ENCODE measurements at regions of chr10 and their contacts with region 1.

Region 1: DNA sequence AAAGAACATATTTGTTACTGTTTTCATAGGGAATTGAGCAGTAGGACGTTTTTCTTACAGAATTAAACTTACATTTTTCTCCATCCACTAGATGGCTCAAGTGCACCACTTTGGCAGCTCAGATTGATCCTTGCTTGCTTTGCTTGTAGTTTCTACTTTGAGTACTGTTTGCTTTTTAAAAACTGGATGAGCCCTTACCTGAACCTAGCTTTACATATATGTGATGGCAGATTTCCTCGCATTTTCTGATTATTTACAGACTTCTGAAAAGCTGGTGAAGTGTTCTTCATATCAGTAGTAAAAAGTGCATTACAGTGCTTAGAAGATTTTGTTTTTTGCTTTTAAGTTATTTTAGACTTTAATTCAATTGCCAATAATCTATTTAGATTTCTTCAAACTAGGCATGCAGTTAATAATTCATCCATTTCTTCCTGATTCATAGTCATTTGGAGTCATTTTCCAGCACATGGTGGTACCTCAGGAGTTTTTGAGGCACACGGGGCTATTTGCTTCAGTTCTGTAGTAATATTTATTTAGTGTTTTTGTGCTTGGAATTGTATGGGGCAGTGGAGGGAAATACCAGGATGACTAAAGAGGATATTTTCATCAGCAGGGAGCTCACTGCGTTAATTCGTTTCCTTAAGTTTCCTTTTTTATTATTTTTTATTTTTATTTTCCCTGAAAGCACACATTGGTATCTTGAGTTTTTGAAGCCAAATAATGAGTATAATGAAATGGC is 57.3 kb downstream of the MAPK8 start:
- DNase-seq: no peak

Region 2: DNA sequence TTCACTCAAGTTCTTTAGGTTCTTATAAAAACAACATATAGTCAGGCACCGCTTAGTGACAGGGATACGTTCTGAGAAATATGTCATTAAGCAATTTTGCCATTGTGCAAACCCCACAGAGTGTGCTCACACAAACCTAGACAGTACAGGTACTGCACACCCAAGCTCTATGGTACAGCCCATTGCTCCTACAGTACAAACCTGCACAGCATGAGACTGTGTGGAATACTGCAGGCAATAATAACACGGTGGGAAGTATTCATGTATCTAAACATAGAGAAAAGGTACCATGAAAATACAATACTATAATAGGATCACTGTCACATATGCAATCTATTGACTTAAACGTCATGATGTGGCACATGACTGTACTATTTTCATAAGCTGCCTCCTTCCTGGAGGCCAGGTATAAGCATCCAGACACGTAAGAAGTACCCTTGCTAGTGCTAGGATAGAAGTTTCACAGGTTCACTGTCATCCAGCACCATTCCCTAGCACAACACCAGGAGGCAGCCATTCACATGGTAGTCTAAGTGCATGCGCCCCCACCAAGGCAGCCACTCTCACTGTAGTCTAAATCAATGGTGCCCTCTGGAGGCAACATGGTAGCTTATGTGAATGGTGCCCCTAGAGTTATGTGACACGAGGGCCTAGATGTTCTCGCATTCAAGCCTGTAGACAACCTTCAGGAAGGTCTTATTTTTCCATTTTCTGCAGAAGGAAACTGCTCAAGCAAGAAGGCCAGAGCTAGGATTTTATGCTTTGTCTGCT is 142.5 kb after region 1 on chr10:
- intact Hi-C with region 1: loop called (anchors 5 kb)
- DNase-seq: peak; percentile 49

Region 3: DNA sequence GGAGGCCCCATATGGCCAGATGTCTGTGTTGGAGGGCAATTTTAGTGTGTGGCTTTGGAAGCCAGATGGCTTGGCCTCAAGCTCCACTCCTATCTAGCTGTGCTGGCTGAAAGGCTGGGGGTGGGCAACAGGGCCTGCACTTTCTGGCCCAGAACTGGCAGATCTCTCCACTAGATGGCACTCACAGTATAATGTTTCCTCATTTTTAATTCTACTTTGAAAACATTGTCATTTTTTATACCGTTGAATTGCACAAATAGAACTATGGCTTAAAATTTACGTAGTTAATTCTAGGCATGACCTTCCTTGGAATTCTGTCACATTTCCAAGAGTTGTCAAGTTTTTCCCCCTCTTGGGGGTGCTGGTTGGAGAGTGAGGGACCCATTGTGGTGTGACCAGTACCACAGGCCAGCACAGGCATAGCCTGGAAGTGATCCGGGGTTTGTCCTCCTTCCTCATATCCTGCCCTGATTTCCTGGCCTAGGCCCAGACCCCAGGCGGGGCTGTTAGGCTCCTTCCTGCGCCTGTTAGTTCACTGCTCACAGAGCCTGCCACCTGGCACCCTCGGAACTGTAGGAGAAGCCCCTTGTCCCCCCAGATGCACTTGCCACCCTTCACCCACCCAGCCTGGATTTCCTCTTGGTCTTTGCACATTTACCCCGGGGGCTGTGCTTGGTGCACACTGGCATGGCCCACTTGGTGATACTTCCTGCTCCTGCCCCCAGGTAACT is 188.2 kb after region 1 on chr10:
- intact Hi-C with region 1: loop called (anchors 2 kb)
- DNase-seq: peak; percentile 20